Sigmoid colon (tissue), 7 donors: ENCODE measurements at regions of chr5 and their contacts with region 1.

Region 1: GRCh38 chr5:173618927-173619519 is 2.6 kb upstream of the BOD1 start:
- DNase-seq: no peak
- H3K4me3 ChIP-seq: no peak overlapping the region
- H3K27ac ChIP-seq: no peak overlapping the region
- H3K4me1 ChIP-seq: peaks cover 0 to 22% (median 22%) of the 10 kb centered on the region in 4 donors
- H3K27me3 ChIP-seq: no peaks in the 10 kb centered on the region
- CTCF ChIP-seq: peak; percentile 66 to 79 (median 68)
- EP300 ChIP-seq: no peak
- POLR2A ChIP-seq: no peak

Region 2: DNA sequence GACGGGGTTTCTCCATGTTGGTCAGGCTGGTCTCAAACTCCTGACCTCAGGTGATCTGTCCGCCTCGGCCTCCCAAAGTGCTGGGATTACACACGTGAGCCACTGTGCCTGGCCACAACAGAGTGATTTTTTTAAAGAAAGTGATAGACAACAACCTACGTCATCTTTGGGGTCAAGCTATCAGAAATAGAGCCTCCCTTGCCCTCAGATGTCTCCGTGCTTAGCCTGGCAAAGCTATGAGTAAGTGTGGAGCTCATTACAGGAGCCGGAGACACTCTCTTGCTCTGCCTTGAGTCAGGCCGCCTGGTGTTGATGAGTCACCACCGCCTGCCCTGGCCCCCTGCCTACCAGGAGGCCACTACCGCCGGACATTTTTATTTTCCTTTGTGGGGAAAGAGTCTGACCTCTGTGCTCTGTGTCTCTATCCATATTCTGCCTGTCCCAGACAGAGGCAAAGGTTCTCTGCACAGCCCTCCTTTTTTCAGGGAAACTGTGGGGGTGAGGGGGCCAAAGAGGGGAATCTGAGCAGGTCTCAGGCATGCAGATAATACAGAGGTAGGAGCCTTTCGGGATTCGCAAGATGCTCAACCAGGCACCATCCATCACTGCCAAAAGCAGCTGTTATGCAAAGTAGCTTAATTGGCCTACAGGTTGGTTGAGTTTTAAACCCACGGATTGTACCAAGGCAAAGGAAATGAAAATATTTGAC is 145.5 kb after region 1 on chr5:
- intact Hi-C with region 1: no loop called
- DNase-seq: peak; percentile 91
- H3K4me3 ChIP-seq: no peak overlapping the region
- H3K27ac ChIP-seq: peak overlapping the region; percentile 40 to 68 (median 48)
- H3K4me1 ChIP-seq: peaks cover 0 to 18% (median 11%) of the 10 kb centered on the region in 4 donors
- H3K27me3 ChIP-seq: no peaks in the 10 kb centered on the region
- CTCF ChIP-seq: no peak
- EP300 ChIP-seq: peak in 1 of 4 donors; percentile 79
- POLR2A ChIP-seq: no peak

Region 3: DNA sequence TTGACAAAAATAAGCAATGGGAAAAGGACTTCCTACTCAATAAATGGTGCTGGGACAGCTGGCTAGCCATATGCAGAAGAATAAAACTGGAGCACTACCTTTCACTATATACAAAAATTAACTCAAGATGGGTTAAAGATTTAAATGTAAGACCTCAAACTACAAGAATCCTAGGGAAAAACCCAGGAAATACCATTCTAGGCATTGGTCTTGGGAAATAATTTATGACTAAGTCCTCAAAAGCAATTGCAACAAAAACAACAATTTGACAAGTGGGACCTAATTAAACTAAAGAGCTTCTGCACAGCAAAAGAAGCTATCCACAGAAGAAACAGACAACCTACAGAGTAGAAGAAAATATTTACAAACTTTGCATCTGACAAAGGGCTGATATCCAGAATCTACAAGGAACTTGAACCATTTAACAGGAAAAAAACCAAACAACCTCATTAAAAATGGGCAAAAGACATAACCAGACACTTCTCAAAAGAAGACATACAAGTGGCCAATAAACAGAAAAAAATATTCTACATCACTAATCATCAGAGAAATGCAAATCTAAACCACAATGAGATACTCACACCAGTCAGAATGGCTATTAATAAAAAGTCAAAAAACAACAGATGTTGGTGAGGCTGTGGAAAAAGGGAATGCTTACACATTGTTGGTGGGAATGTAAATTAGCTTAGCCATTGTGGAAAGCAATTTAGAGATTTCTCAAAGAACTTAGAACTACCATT is 194.0 kb after region 1 on chr5:
- intact Hi-C with region 1: no loop called
- DNase-seq: no peak
- H3K4me3 ChIP-seq: no peak overlapping the region
- H3K27ac ChIP-seq: no peak overlapping the region
- H3K4me1 ChIP-seq: no peaks in the 10 kb centered on the region
- H3K27me3 ChIP-seq: no peaks in the 10 kb centered on the region
- CTCF ChIP-seq: no peak
- EP300 ChIP-seq: no peak
- POLR2A ChIP-seq: no peak

Region 4: DNA sequence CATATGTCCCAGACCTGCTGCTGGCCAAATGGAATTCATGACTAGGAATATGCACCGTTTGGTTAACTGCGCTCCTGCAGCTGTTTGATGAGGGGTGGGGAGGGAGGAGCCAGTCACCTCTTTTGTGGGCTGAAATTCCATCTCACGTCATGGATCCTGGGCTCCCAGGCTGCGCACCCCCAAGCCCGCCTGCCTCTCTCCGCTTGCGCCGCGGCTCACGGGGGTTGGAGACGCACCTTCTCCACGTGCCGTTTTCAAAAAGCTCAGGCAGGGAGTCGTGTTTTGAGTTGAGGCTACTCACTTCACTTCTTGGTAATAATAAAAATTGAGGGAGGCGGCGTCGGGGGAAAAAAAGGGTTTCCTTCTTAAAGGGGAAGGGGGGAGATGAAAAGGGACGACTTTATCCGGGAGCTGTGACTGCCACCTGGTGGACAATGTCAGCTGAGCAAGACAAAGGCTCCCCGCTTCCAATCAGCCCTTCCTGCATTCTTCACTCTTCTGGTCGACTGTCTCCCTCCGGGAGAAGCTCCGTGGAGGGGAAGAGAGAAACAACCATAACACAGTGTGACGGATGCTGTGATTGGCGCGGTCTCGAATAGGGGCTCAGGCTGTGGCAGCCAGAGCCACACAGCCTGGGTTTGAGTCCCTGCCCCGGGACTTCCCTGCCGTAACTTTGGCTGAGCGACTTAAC is 354.0 kb after region 1 on chr5:
- intact Hi-C with region 1: loop called (anchors 1 kb)
- DNase-seq: peak; percentile 91
- H3K4me3 ChIP-seq: peak overlapping the region; percentile 18 to 51 (median 46)
- H3K27ac ChIP-seq: peak overlapping the region in 2 of 4 donors; percentile 15 to 38
- H3K4me1 ChIP-seq: peaks cover 0 to 11% (median 5%) of the 10 kb centered on the region in 4 donors
- H3K27me3 ChIP-seq: no peaks in the 10 kb centered on the region
- CTCF ChIP-seq: peak; percentile 78 to 93 (median 88)
- EP300 ChIP-seq: no peak
- POLR2A ChIP-seq: no peak

Region 5: DNA sequence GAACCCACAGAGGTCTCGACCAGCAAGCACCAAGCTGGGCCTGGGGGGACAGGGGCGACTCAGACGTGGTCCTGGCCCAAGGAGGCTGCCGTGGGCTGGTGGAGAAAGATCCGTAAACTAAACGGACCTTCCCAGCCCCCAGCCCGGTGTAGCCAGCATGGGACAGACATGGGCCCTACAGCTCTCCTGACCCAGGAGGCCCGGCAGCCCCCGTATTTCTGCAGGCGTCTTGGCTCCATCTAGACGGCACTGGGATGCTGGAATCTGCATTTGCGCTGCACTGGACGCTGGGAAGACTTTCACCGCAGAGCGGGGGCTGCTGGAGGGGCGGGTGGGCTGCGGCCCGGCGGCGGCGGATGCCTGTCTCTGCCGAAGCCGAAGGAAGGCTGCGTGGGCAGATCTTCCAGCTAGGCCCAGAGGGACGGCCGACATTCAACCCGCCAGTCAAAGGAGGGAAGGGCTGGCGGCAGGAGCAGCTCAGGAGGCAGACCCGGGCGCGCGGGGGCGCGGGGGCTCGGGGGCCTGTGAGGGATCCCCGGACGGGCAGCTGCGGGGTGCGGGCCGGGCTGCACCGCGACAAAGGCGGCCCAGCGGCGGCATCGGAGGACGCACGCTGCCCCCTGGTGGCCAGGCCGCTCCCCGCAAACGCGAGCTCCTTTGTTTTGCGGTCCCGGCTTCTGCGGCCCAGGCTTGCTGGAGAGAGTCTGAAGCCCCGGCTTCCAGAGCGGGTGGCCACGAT is 692.7 kb after region 1 on chr5:
- intact Hi-C with region 1: loop called (anchors 2 kb)
- DNase-seq: no peak
- H3K4me3 ChIP-seq: peak overlapping the region in 3 of 4 donors; percentile 41 to 54 (median 43)
- H3K27ac ChIP-seq: no peak overlapping the region
- H3K4me1 ChIP-seq: peaks cover 0 to 13% (median 10%) of the 10 kb centered on the region in 4 donors
- H3K27me3 ChIP-seq: peaks cover 2 to 35% (median 4%) of the 10 kb centered on the region in 3 donors
- CTCF ChIP-seq: peak; percentile 22 to 88 (median 43)
- EP300 ChIP-seq: no peak
- POLR2A ChIP-seq: no peak